ENCODE measurements at regions of chr7 and their contacts with region 1.

Region 1: GRCh38 chr7:94657771-94658693 is 2.1 kb upstream of the SGCE start:
- DNase-seq: peak; percentile 96
- H3K4me3 ChIP-seq: peak overlapping the region in 2 of 3 experiments; percentile 37 to 49
- H3K27ac ChIP-seq: no peak overlapping the region
- H3K4me1 ChIP-seq: no peaks in the 10 kb centered on the region
- H3K27me3 ChIP-seq: no peaks in the 10 kb centered on the region
- CTCF ChIP-seq: peak in 1 of 2 donors; percentile 6

Region 2: GRCh38 chr7:94295850-94296249 is 362.2 kb before region 1 on chr7:
- CTCF ChIA-PET with region 1: no interaction called
- dilution Hi-C with region 1: no loop called
- in situ Hi-C with region 1: no loop called
- intact Hi-C with region 1: loop called (anchors 10 kb)
- DNase-seq: peak; percentile 30
- H3K4me3 ChIP-seq: no peak overlapping the region
- H3K27ac ChIP-seq: no peak overlapping the region
- H3K4me1 ChIP-seq: peaks cover 19% of the 10 kb centered on the region
- H3K27me3 ChIP-seq: no peaks in the 10 kb centered on the region
- CTCF ChIP-seq: peak; percentile 34 to 60

Region 3: DNA sequence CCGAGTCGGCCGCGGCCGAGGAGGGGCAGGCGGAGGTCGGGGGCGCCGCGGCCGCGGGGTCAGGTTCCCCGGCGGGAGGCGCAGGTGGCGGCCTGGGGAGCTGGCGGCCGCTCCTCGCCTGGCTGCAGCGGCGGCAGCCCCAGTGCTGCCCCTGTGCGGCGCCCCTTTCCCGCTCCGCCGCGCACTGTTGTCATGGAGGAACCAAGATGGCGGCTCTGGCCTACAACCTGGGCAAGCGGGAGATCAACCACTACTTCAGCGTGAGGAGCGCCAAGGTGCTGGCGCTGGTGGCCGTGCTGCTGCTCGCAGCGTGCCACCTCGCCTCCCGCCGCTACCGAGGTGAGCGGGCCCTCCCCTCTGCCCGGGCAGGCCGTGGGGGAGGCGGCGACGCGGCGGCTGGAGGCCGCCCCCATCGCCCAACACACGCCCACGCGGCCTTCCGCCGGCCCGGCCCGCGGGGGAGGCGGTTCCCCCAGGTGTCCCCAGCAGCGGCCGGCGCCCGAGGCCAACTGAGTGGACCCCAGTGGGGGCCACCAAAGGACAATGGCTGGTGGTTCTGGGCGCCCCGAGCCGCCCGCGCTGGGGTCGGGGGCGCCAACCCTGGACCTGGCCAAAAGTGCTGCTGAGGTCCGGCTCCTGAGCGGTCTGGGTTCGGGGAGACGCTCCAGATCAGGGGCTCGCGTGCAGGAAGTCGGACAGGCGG is 148.0 kb before region 1 on chr7:
- CTCF ChIA-PET with region 1: no interaction called
- dilution Hi-C with region 1: no loop called
- in situ Hi-C with region 1: no loop called
- intact Hi-C with region 1: loop called (anchors 1 kb)
- DNase-seq: peak; percentile 48
- H3K4me3 ChIP-seq: peak overlapping the region; percentile 54 to 86 (median 83)
- H3K27ac ChIP-seq: peak overlapping the region; percentile 68
- H3K4me1 ChIP-seq: peaks cover 25% of the 10 kb centered on the region
- H3K27me3 ChIP-seq: no peaks in the 10 kb centered on the region
- CTCF ChIP-seq: peak in 1 of 2 donors; percentile 43

Region 4: GRCh38 chr7:94620703-94621118 is 37.3 kb before region 1 on chr7:
- CTCF ChIA-PET with region 1: interaction called, 7 read pairs
- dilution Hi-C with region 1: no loop called
- in situ Hi-C with region 1: no loop called
- intact Hi-C with region 1: loop called (anchors 2 kb)
- DNase-seq: peak; percentile 99
- H3K4me3 ChIP-seq: no peak overlapping the region
- H3K27ac ChIP-seq: peak overlapping the region; percentile 56
- H3K4me1 ChIP-seq: peaks cover 13% of the 10 kb centered on the region
- H3K27me3 ChIP-seq: no peaks in the 10 kb centered on the region
- CTCF ChIP-seq: no peak

Region 5: DNA sequence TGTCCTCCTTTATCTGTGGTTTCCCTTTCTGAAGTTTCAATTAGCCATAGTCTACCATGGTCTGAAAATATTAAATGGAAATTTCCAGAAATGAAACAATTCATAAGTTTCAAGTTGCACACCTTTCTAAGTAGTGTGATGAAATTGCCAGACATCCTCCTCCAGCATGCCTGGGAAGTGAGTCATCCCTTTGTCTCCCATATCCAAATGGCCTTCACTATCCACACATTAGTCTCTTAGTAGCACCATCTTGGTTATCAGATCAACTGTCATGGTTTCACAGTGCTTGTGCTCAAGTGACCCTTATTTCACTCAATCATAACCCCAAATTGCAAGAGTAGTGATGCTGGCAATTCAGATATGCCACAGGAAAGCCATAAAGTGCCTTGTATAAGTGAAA is 165.9 kb after region 1 on chr7:
- CTCF ChIA-PET with region 1: no interaction called
- dilution Hi-C with region 1: no loop called
- in situ Hi-C with region 1: no loop called
- intact Hi-C with region 1: no loop called
- DNase-seq: peak; percentile 74
- H3K4me3 ChIP-seq: no peak overlapping the region
- H3K27ac ChIP-seq: no peak overlapping the region
- H3K4me1 ChIP-seq: peaks cover 4% of the 10 kb centered on the region
- H3K27me3 ChIP-seq: no peaks in the 10 kb centered on the region
- CTCF ChIP-seq: no peak

Region 6: DNA sequence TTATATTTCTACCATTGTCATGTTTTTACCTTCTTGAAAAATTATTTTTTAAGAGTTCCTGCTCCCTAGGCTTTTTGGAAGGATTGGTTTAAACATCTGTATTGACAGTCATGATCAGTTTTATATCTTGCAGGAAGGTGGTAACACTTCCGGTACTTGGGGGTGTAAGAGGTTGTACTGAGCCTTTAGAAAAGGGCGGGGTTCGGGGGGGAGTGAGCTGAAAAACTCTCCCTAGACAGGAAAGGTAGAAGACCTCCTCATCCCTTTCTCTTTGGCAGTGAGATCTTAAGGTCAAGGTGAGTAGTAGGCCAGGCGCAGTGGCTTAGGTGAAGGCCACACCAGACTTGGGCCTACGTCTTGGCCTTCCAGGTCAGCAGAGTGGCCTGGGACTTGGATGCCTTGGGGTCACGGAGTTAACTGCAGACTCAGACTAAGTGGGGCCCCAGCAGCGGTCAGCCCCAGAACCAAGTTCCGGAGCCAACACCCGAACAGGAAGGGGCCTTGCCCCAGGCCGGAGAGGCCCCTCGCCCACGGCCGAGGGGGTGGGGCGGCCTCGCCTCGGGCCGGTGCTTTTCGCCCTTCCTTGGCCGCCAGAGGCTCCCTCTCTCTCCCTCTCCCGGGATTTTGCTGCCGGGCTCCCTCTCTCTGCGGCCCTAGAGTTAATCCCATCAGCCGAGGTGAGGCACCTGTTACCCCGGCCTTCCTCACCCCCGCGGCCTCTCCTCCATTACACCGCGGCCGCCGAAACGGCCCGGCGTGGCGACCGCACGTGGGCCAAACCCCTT is 249.2 kb after region 1 on chr7 and contains the start of gene PPP1R9A:
- CTCF ChIA-PET with region 1: no interaction called
- dilution Hi-C with region 1: no loop called
- in situ Hi-C with region 1: no loop called
- intact Hi-C with region 1: loop called (anchors 10 kb)
- DNase-seq: no peak
- H3K4me3 ChIP-seq: peak within 1 kb of the TSS; percentile 20 to 34 (median 31)
- H3K27ac ChIP-seq: no peak within 1 kb of the TSS
- H3K4me1 ChIP-seq: peaks cover 4% of the 10 kb centered on the region
- H3K27me3 ChIP-seq: peaks cover 27% of the 10 kb centered on the region
- CTCF ChIP-seq: no peak
- total RNA-seq, gene PPP1R9A: 1.7 TPM in 1 of 2 donors, not detected in the other

Region 7: GRCh38 chr7:95199779-95200558 is 541.9 kb after region 1 on chr7:
- CTCF ChIA-PET with region 1: no interaction called
- dilution Hi-C with region 1: no loop called
- in situ Hi-C with region 1: no loop called
- intact Hi-C with region 1: loop called (anchors 5 kb)
- DNase-seq: peak; percentile 17
- H3K4me3 ChIP-seq: no peak overlapping the region
- H3K27ac ChIP-seq: no peak overlapping the region
- H3K4me1 ChIP-seq: no peaks in the 10 kb centered on the region
- H3K27me3 ChIP-seq: peaks cover 12% of the 10 kb centered on the region
- CTCF ChIP-seq: peak; percentile 64 to 88

Measured in mammary epithelial cell (primary cell).